ENCODE measurements at regions of chr10 and their contacts with region 1.

Region 1: DNA sequence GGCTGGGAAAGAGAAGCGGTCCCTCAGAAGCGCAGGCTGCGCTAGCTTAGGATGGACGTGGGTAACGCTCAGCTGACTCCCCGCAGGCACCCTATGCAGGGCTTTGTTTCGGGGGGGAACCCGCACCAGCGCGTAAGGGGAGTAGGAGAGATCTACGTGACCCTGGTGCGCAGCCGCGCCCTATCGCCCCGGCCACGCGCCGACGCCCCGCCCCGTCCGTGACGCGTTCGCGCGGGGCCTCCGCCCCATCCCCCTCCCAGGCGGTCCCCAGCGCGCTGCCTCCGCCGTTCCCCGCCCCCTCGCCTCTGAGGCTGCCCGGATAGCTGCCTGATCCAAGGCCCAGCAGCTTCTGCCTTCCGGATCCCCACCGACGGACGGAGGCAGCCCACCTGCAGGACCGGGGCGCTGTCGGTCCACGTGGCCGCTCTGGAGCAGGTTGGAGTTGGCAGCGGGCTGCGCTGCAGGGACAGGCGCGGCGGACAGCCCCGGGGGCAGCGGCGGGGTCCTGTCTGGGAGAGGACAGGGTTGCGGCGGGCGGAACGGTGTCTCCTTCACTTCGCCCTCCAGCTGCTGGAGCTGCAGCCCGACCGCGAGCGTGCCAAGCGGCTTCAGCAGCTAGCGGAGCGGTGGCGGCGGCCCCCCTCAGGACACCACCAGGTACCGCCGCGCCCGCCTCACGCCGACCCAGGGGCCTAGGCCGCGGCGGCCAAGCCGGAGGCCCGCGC is at the start of gene VDAC2:
- DNase-seq: peak; percentile 94
- ATAC-seq: peak; percentile 92
- H3K4me3 Mint-ChIP-seq: peak within 1 kb of the TSS; percentile 97
- H3K27ac Mint-ChIP-seq: peak within 1 kb of the TSS; percentile 100
- H3K4me1 Mint-ChIP-seq: peaks cover 44% of the 10 kb centered on the region
- H3K27me3 Mint-ChIP-seq: no peaks in the 10 kb centered on the region
- total RNA-seq, gene VDAC2: 136 to 156 TPM

Region 2: GRCh38 chr10:75029857-75030256 is 180.6 kb before region 1 on chr10:
- CTCF ChIA-PET with region 1: no interaction called
- DNase-seq: no peak
- ATAC-seq: no peak
- H3K4me3 Mint-ChIP-seq: no peak overlapping the region
- H3K27ac Mint-ChIP-seq: no peak overlapping the region
- H3K4me1 Mint-ChIP-seq: peaks cover 12% of the 10 kb centered on the region
- H3K27me3 Mint-ChIP-seq: no peaks in the 10 kb centered on the region

Region 3: GRCh38 chr10:75165684-75166622 is 44.5 kb before region 1 on chr10:
- CTCF ChIA-PET with region 1: no interaction called
- DNase-seq: peak; percentile 66
- ATAC-seq: peak; percentile 83
- H3K4me3 Mint-ChIP-seq: peak overlapping the region; percentile 13
- H3K27ac Mint-ChIP-seq: peak overlapping the region; percentile 83
- H3K4me1 Mint-ChIP-seq: peaks cover 23% of the 10 kb centered on the region
- H3K27me3 Mint-ChIP-seq: no peaks in the 10 kb centered on the region

Region 4: DNA sequence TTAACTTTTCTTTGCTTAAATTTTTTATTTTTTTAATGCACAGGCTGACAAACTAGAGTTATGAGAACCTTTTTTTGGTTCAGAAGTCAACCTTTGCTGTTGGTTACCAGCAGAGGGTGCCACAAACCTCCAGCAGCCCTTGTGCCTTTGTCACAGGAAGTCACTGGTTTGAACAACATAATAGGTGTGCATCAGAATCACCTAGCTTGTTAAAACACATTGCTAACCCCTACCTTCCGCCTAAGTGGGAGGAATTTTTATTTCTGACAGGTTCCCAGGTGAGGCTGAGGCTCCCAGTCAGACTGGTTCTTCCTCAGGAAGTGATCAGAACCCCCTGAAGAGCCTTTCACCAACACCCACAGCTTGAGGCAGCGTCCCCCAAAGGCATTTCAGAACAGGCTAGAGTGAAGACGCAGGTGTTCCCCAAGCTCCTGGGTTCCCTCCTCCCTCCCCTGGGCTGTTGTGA is 22.4 kb before region 1 on chr10:
- CTCF ChIA-PET with region 1: interaction called, 30 read pairs
- DNase-seq: peak; percentile 82
- ATAC-seq: peak; percentile 90
- H3K4me3 Mint-ChIP-seq: no peak overlapping the region
- H3K27ac Mint-ChIP-seq: peak overlapping the region; percentile 67
- H3K4me1 Mint-ChIP-seq: peaks cover 13% of the 10 kb centered on the region
- H3K27me3 Mint-ChIP-seq: no peaks in the 10 kb centered on the region

Measured in activated CD8-positive, alpha-beta memory T cell treated with anti-CD3 and anti-CD28 coated beads, Interleukin-2, amount 10 ng/mL, durations not matched to agents 7 days and 5 days (primary cell).